Activated T-helper 1 cell treated with anti-CD3 and anti-CD28 coated beads, Interleukin-12 subunit alpha, Interleukin-12 subunit beta, Interleukin-2, Interleukin-4 antibody, amounts not matched to agents 30 ng/mL and 10 ng/mL and 1 ng/mL, durations not matched to agents 14 hours and 24 hours and 36 hours (primary cell): ENCODE measurements at regions of chr10 and their contacts with region 1.

Region 1: GRCh38 chr10:7045891-7046599 is 364.8 kb downstream of the SFMBT2 start:
- DNase-seq: peak; percentile 28
- H3K4me3 Mint-ChIP-seq: peak overlapping the region; percentile 2
- H3K27ac Mint-ChIP-seq: peak overlapping the region; percentile 79
- H3K4me1 Mint-ChIP-seq: peaks cover 53% of the 10 kb centered on the region
- H3K27me3 Mint-ChIP-seq: peaks cover 2% of the 10 kb centered on the region

Region 2: DNA sequence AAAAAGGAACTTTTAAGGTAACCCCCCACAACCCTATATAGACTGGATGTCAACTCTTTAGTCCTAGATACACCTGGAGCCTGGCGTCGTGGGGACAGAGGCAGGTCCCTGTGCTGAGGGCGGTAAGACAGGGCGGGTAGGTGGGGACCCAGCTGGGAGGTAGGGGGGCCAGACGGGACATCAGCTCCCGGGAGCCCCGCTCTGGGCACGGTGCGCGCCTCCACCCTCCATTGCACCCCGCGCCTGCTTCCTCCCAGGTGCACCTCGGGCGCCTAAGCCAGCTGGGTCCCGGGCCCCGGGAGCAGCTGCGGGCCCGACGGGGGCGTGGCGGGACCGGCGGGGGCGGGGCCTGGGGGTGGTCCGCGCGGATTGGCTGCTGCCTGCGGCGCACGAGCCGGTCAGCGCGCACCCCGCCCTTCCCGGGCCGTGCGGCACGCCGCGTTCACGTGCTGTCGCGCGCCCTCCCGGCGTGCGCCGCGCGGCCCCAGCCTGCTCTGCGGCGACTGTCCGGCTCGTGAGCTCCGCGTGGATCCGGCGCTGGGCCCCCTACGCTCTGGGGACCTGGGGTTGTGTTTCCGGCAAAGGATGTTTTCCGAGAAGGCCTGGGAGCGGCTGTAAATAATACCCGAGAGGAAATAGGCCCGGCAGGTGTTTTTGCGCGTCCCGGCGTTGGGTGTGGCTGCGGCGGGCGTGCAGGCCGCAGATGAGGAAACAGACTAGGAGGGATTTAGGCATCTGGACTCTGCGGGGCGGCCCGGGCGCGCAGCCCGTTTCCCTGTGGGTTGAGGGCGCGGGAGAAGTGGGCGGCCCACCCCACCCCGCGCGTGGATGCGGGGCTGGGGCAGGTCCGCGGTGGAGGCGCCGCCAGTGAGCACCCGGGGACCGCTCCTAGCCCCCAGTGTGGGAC is 882.4 kb before region 1 on chr10:
- intact Hi-C with region 1: no loop called
- DNase-seq: peak; percentile 88
- H3K4me3 Mint-ChIP-seq: peak overlapping the region; percentile 94
- H3K27ac Mint-ChIP-seq: peak overlapping the region; percentile 95
- H3K4me1 Mint-ChIP-seq: peaks cover 54% of the 10 kb centered on the region
- H3K27me3 Mint-ChIP-seq: no peaks in the 10 kb centered on the region

Region 3: DNA sequence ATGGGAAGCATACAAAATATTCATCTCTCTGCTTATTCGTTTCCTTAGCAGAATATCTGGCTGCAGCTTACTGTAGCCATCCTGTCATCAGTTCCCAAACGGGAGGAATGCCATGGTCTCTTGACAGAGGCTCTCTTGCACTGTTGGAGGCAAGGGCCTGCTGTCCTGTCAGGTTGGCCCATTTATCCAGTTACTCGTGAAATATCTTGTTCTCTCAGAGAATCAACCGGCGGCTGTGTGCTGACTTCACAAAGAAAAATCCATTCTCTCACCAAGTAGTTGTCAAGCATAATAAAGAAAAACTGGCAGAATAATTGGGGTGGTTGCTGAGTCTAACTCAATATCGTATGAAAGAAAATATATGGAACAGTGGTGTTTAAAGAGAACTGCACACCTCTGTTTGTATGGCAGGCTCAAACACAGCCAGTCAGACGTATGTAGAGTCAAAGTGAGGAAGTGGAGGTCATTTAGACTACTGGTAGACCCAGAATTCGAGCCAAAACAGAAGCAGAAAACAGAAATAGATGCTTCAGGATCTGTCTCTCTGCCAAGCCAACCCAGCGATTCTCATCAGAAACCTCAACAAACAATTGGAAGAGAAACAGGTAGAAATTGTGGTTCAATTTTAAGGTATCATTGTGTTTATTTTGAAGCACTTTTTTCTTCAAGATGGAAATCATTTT is 116.8 kb before region 1 on chr10:
- intact Hi-C with region 1: loop called (anchors 1 kb)
- DNase-seq: no peak
- H3K4me3 Mint-ChIP-seq: peak overlapping the region; percentile 19
- H3K27ac Mint-ChIP-seq: no peak overlapping the region
- H3K4me1 Mint-ChIP-seq: peaks cover 54% of the 10 kb centered on the region
- H3K27me3 Mint-ChIP-seq: peaks cover 6% of the 10 kb centered on the region

Region 4: GRCh38 chr10:6995831-6996230 is 50.2 kb before region 1 on chr10:
- intact Hi-C with region 1: no loop called
- DNase-seq: no peak
- H3K4me3 Mint-ChIP-seq: no peak overlapping the region
- H3K27ac Mint-ChIP-seq: no peak overlapping the region
- H3K4me1 Mint-ChIP-seq: peaks cover 2% of the 10 kb centered on the region
- H3K27me3 Mint-ChIP-seq: peaks cover 8% of the 10 kb centered on the region

Region 5: DNA sequence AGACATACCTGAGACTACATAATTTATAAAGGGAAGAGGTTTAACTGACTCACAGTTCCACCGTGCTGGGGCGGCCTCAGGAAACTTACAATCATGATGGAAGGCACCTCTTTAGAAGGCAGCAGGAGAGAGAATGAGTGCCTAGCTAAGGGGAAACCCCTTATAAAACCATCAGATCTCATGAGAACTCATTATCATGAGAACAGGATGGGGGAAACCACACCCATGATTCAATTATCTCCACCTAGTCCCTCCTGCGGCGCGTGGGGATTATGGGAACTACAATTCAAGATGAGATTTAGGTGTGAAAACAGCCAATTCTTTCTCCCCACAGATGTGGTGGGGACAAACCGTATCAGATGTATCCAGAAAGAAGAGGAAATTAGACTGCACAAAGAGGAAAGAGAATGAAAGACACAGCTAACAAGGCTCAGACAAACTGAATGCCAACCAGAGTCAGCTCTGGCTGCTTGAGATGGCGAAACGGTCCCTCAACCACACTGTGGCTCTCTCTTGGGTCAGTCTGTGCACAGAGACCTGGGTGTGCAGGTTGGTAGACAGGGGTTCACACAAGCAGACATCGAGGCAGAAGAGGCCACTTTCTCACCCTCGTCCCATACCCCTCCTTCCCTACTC is 10.8 kb before region 1 on chr10:
- intact Hi-C with region 1: loop called (anchors 1 kb)
- DNase-seq: no peak
- H3K4me3 Mint-ChIP-seq: no peak overlapping the region
- H3K27ac Mint-ChIP-seq: peak overlapping the region; percentile 69
- H3K4me1 Mint-ChIP-seq: peaks cover 74% of the 10 kb centered on the region
- H3K27me3 Mint-ChIP-seq: peaks cover 5% of the 10 kb centered on the region

Region 6: DNA sequence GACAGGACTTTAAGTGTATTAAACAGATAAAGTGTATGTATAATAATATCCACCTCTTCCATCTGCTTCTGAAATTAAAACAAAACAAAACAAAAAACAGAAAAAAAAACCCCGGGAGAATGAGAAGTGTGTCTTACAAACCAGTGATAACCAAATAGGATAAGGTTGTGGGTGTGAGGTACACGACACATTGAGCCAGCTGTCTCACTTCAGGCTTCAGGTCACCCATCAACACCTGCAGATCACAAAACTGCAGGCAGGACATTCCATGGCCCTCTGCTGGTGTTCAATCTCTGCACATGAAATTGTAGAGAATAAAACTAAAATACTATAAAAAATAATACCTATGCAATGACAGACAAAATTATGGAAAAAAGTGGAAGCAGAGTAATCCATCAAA is 24.9 kb after region 1 on chr10:
- intact Hi-C with region 1: loop called (anchors 1 kb)
- DNase-seq: no peak
- H3K4me3 Mint-ChIP-seq: no peak overlapping the region
- H3K27ac Mint-ChIP-seq: no peak overlapping the region
- H3K4me1 Mint-ChIP-seq: no peaks in the 10 kb centered on the region
- H3K27me3 Mint-ChIP-seq: peaks cover 22% of the 10 kb centered on the region